Posterior cingulate gyrus (tissue), 11 donors: ENCODE measurements at regions of chr2 and their contacts with region 1.

Region 1: GRCh38 chr2:10911261-10912075 is at the start of gene KCNF1:
- DNase-seq: peak in 5 of 10 donors; percentile 8 to 92 (median 82)

Region 2: DNA sequence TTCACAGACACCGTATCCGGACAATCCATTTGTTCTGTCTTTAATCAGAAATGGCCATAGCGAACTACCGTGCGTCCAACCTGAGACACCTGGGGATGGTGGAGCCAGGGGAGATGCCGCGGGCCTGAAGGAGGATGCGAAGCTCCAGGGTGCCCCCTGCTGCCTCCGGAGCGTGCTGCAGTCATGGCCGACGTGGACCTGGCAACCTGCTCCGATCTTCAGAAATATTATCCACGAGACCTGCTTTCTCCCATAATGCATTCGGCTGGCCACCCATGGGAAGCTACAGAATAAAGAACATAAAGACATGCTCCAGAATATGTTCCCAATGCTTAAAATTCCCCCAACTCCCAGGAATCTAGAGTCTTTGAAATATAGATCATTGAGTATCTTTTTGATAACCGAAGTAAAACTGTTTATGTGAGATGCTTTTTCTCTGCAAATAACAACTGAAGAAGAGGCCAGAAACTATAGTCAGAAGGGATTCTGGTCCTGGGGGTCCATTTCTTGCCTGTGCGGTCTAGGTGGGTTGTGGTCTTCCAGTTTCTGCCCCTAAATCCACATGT is 213.1 kb after region 1 on chr2:
- intact Hi-C with region 1: loop called (anchors 10 kb)
- DNase-seq: peak; percentile 61 to 96 (median 80)